Aorta (tissue), 5 donors: ENCODE measurements at regions of chr13 and their contacts with region 1.

Region 1: GRCh38 chr13:75803164-75803611 is 167.1 kb downstream of the LMO7 start:
- DNase-seq: no peak
- ATAC-seq: peak; percentile 4
- H3K4me3 ChIP-seq: no peak overlapping the region
- H3K27ac ChIP-seq: peak overlapping the region; percentile 85 to 95
- H3K4me1 ChIP-seq: peaks cover 2 to 5% of the 10 kb centered on the region in 2 donors
- H3K27me3 ChIP-seq: no peaks in the 10 kb centered on the region

Region 2: DNA sequence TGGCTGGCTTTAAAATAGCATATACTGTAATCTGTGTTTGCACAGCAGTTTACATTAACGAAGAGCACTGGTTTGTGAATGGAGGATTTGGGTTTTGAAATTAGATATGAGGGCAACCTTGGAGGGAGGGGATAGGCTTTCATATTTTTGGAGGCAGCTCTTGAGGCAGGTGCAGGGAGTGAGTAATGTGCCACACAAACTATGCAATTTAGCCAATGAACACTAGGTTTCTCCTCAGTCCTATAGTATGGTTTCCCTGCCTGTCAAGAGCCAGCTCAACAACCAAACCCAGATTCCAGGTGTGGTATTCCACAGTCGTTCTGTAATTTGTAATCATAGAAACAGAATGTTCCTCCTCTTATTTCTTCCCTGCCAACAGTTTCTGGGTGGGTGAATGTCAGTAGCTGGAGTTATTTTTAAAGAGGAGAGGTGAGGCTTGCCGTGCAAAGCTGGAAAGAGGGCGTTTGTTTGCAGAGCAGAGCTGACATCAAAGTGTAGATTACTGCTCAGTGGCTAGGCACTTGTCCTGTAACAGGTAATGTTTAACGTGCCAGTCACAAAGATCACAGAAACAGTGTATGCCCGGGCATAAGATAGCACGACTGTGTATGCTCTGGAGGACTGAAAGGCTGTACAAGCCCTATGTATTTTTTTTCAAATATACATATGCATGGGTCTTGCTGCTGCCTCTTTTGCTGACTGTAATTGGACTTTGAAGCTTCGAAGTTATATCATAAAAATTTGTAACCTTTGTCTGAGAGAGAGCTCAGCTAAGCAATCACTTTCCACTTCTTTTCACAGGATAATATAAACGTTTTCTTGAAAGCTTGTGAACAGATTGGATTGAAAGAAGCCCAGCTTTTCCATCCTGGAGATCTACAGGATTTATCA is 42.8 kb before region 1 on chr13:
- intact Hi-C with region 1: loop called (anchors 5 kb)
- DNase-seq: no peak
- ATAC-seq: peak; percentile 23
- H3K4me3 ChIP-seq: peak overlapping the region; percentile 46 to 87
- H3K27ac ChIP-seq: peak overlapping the region in 1 of 2 donors; percentile 71
- H3K4me1 ChIP-seq: peaks cover 2 to 8% of the 10 kb centered on the region in 2 donors
- H3K27me3 ChIP-seq: no peaks in the 10 kb centered on the region

Region 3: GRCh38 chr13:75769141-75769905 is 33.9 kb before region 1 on chr13:
- intact Hi-C with region 1: loop called (anchors 5 kb)
- DNase-seq: no peak
- ATAC-seq: no peak
- H3K4me3 ChIP-seq: no peak overlapping the region
- H3K27ac ChIP-seq: no peak overlapping the region
- H3K4me1 ChIP-seq: peaks cover 2 to 12% of the 10 kb centered on the region in 2 donors
- H3K27me3 ChIP-seq: no peaks in the 10 kb centered on the region